Upper lobe of right lung (tissue), 1 donor: ENCODE measurements at regions of chr5 and their contacts with region 1.

Region 1: GRCh38 chr5:74035521-74035981 is 409.6 kb downstream of the ARHGEF28 start:
- DNase-seq: no peak
- ATAC-seq: peak; percentile 82
- H3K4me3 ChIP-seq: no peak overlapping the region
- H3K27ac ChIP-seq: no peak overlapping the region
- H3K4me1 ChIP-seq: no peaks in the 10 kb centered on the region
- H3K27me3 ChIP-seq: no peaks in the 10 kb centered on the region
- CTCF ChIP-seq: peak; percentile 48

Region 2: DNA sequence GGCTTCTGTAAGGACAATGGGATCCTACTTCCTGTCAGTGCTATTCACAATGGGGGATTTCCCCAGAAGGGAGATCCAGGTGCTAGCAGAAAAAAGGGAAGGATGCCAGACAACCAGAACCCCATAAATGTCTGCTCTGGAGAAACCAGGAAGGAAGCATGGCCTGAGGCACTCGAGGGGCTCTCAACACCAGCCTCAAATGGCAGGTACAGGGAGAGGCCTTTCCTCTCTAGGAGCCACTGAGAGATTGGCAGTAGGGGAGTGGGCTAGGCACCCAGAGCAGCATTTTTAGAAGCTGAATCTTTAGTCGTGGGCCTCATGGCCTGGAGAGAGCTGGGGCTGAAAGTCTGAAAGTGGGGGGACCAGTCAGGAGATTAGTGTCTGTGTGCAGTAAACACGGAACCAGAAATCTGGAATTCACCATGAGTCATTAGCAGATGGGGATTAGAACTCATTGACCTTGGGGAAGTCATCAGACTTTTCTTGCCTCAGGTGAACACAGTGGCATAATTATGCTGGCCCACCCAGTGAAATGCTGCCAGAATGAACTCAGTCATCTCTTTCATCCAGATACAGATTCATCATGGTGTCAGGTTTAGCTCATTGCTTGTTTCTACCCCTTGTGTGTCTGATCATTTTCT is 381.3 kb before region 1 on chr5:
- intact Hi-C with region 1: no loop called
- DNase-seq: no peak
- ATAC-seq: no peak
- H3K4me3 ChIP-seq: no peak overlapping the region
- H3K27ac ChIP-seq: no peak overlapping the region
- H3K4me1 ChIP-seq: no peaks in the 10 kb centered on the region
- H3K27me3 ChIP-seq: no peaks in the 10 kb centered on the region
- CTCF ChIP-seq: no peak

Region 3: DNA sequence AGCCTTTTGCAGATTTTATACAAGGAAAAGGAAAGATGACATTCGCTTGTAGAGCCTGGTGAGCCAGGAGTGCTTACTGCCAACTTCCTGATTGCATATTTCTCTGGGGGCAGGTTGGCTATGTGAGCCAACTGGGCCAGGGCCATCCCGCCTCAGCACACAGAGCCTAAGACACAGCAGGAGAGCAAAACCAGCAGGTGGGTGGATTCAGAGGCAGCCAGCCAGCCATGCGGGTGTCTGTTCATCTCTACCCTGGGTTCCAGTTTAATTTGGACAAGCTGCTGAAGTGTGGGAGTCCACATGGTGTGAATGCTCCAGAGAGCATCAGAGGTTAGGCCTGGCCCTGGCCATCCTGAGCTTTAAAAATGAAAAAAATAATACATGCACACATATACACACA is 118.1 kb before region 1 on chr5:
- intact Hi-C with region 1: loop called (anchors 10 kb)
- DNase-seq: no peak
- ATAC-seq: peak; percentile 69
- H3K4me3 ChIP-seq: no peak overlapping the region
- H3K27ac ChIP-seq: no peak overlapping the region
- H3K4me1 ChIP-seq: peaks cover 13% of the 10 kb centered on the region
- H3K27me3 ChIP-seq: no peaks in the 10 kb centered on the region
- CTCF ChIP-seq: no peak

Region 4: DNA sequence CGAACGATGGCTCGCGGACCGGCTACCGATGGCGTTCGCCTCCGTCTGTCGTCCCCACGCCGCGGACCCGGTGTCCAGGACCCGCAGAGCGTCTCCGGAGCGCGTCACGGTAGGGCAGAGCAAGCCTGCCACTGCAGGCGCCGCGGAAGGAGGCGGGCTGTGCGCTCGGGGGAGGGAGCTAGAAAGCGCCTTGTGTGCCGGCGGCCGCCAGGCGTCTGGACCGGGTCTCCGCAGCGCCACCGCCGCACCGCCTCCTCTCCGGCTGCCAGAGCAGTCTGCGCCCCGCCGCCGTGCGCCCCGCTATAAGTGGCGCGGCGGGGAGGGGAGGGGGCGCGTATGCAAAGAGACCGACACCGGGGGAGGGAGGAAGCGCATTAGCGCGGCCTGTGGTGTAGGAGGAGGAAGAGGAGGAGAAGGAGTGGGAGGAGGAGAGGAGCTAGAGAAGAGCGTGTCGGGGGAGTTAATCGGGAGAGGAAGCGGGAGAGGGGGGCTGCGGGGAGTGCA is 605.0 kb after region 1 on chr5 and contains the start of gene ENC1:
- intact Hi-C with region 1: loop called (anchors 5 kb)
- DNase-seq: peak; percentile 96
- ATAC-seq: peak; percentile 93
- H3K4me3 ChIP-seq: peak within 1 kb of the TSS; percentile 85
- H3K27ac ChIP-seq: peak within 1 kb of the TSS; percentile 93
- H3K4me1 ChIP-seq: peaks cover 38% of the 10 kb centered on the region
- H3K27me3 ChIP-seq: no peaks in the 10 kb centered on the region
- CTCF ChIP-seq: peak; percentile 57
- total RNA-seq, gene ENC1: 15.0 TPM